Gastrocnemius medialis (tissue), 4 donors: ENCODE measurements at regions of chr17 and their contacts with region 1.

Region 1: DNA sequence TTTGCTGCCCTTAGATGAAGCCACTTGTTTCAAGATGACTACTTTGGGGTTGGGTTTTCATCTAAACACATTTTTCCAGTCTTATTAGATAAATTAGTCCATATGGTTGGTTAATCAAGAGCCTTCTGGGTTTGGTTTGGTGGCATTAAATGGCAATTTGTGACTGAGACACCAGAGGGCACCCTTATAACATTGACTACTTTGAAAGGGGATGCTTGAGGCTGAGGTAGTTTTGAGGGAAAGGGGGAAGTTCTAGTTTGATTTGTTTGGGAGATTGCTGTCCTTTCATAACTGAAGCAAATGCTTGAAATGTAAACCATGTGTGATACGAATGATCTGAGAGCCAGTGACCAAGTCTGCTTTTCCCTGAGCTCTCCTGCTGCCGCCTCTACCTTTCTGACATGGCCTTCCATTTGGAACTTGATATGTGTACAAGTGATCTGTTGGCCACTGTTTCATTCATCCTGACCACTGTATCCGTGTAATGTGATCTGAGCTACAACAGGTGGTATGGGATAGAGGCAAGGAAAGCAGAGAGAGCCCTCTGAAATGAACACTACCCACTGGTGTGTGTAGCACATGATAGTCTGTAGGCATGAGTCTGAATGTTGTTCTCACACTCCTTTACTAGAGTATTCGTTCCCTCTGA is 5.8 kb upstream of the RARA start:
- DNase-seq: peak in 1 of 2 donors; percentile 66
- ATAC-seq: peak; percentile 92 to 98
- H3K4me3 ChIP-seq: no peak overlapping the region
- H3K27ac ChIP-seq: peak overlapping the region; percentile 78 to 87 (median 82)
- H3K4me1 ChIP-seq: peaks cover 35 to 50% of the 10 kb centered on the region in 2 donors
- H3K27me3 ChIP-seq: no peaks in the 10 kb centered on the region
- CTCF ChIP-seq: peak; percentile 82 to 92 (median 86)
- POLR2A ChIP-seq: no peak

Region 2: DNA sequence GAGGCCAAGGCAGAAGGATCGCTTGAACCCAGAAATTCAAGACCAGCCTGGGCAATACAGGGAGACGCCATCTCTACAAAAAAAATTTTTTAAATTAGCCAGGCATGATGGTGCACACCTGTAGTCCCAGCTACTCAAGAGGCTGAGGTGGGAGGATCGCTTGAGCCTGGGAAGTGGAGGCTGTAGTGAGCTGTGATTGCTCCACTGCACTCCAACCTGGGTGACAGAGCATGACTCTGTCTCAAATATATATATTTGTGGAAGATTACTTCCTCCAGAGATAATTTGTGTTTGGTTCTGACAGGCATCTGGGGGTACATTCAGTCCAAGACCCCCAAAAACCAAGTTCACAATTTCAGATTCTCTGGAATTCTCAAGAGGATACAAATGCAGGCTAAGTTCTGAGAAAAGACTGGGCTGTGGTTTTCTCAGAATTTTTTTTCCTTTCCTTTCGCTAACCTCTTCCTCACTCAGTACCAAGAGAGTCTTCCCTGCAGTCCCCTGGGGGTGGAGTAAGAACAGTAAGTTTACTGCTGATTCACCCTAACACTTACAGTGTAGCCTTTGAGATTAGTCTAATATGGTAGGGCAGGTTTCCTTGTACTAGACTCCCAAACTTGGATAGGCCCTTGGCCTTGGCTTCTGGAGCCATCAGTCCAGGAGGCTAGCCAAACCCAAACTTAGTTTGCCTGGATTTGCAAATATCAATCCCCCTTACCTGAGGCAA is 399.8 kb before region 1 on chr17:
- in situ Hi-C with region 1: no loop called
- intact Hi-C with region 1: no loop called
- DNase-seq: no peak
- ATAC-seq: no peak
- H3K4me3 ChIP-seq: no peak overlapping the region
- H3K27ac ChIP-seq: no peak overlapping the region
- H3K4me1 ChIP-seq: no peaks in the 10 kb centered on the region
- H3K27me3 ChIP-seq: no peaks in the 10 kb centered on the region
- CTCF ChIP-seq: no peak
- POLR2A ChIP-seq: no peak

Region 3: DNA sequence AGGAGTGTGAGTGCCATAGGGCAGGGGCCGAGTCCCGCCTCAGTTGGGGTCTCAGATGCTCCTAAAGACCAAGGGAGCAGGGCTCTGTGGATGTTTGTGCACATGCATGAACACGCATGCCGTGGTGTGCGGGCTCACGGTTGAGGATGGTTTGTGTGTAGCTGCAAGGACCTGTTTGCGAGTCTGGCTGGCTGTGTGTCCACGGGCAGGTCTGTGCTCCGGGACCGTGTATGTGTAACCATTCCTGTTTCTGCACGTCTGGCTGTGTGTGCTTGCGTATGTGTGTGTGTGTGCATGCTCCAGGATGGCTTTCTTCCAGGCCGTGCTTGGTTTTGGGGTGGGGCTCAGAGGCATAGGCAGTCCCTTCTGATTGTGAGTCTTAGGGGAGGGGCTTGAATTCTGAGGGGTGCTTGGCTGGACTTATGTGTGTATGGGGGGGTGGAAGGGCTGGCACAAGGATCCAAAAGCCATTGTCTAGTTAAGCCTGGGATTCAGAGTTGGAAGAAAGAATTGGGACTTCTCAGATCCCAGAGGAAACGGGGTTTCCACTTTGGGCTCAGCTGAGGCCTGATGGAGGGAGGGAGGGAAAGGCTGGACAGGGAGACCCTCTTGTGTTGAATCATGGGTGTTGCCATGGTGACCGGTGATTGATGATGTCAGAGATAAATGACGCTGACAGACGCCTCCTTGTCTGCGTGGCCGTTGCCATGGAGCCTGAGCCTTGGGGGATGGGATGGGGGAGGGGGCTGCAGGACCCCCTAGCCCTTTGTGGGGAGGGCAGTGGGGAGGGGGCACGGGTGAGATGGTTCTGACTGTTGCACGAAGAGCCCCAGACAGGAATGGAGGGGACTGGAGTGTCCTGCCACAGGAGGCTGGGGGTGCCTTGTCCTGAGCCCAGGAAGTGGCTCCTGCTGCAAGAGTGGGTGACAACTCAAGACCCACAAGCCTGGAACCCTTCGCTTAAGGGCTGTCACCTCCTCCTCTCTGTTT is 47.1 kb after region 1 on chr17:
- in situ Hi-C with region 1: loop called (anchors 5 kb)
- intact Hi-C with region 1: loop called (anchors 1 kb)
- DNase-seq: no peak
- ATAC-seq: no peak
- H3K4me3 ChIP-seq: no peak overlapping the region
- H3K27ac ChIP-seq: peak overlapping the region; percentile 95 to 100 (median 98)
- H3K4me1 ChIP-seq: peaks cover 68 to 71% of the 10 kb centered on the region in 2 donors
- H3K27me3 ChIP-seq: no peaks in the 10 kb centered on the region
- CTCF ChIP-seq: no peak
- POLR2A ChIP-seq: no peak

Region 4: GRCh38 chr17:40355123-40355803 is 52.1 kb after region 1 on chr17:
- in situ Hi-C with region 1: loop called (anchors 5 kb)
- intact Hi-C with region 1: loop called (anchors 1 kb)
- DNase-seq: peak; percentile 50 to 74
- ATAC-seq: peak; percentile 48 to 55
- H3K4me3 ChIP-seq: no peak overlapping the region
- H3K27ac ChIP-seq: peak overlapping the region; percentile 33 to 69 (median 51)
- H3K4me1 ChIP-seq: peaks cover 17 to 20% of the 10 kb centered on the region in 2 donors
- H3K27me3 ChIP-seq: no peaks in the 10 kb centered on the region
- CTCF ChIP-seq: peak; percentile 97 to 99 (median 99)
- POLR2A ChIP-seq: no peak

Region 5: GRCh38 chr17:40371261-40371929 is 68.3 kb after region 1 on chr17:
- in situ Hi-C with region 1: no loop called
- intact Hi-C with region 1: no loop called
- DNase-seq: no peak
- ATAC-seq: no peak
- H3K4me3 ChIP-seq: no peak overlapping the region
- H3K27ac ChIP-seq: no peak overlapping the region
- H3K4me1 ChIP-seq: no peaks in the 10 kb centered on the region
- H3K27me3 ChIP-seq: no peaks in the 10 kb centered on the region
- CTCF ChIP-seq: no peak
- POLR2A ChIP-seq: no peak

Region 6: GRCh38 chr17:40417609-40418427 is 114.7 kb after region 1 on chr17 and contains the start of gene TOP2A:
- in situ Hi-C with region 1: loop called in 1 of 4 experiments (anchors 10 kb)
- intact Hi-C with region 1: loop called (anchors 1 kb)
- DNase-seq: peak; percentile 98 to 99
- ATAC-seq: peak; percentile 100
- H3K4me3 ChIP-seq: peak within 1 kb of the TSS; percentile 57 to 87 (median 62)
- H3K27ac ChIP-seq: peak within 1 kb of the TSS; percentile 37 to 58 (median 46)
- H3K4me1 ChIP-seq: peaks cover 6 to 10% of the 10 kb centered on the region in 2 donors
- H3K27me3 ChIP-seq: peaks cover 0 to 10% (median 5%) of the 10 kb centered on the region in 3 donors
- CTCF ChIP-seq: no peak
- POLR2A ChIP-seq: no peak
- total RNA-seq, gene TOP2A: 0.26 to 1.6 (median 1.0) TPM

Region 7: DNA sequence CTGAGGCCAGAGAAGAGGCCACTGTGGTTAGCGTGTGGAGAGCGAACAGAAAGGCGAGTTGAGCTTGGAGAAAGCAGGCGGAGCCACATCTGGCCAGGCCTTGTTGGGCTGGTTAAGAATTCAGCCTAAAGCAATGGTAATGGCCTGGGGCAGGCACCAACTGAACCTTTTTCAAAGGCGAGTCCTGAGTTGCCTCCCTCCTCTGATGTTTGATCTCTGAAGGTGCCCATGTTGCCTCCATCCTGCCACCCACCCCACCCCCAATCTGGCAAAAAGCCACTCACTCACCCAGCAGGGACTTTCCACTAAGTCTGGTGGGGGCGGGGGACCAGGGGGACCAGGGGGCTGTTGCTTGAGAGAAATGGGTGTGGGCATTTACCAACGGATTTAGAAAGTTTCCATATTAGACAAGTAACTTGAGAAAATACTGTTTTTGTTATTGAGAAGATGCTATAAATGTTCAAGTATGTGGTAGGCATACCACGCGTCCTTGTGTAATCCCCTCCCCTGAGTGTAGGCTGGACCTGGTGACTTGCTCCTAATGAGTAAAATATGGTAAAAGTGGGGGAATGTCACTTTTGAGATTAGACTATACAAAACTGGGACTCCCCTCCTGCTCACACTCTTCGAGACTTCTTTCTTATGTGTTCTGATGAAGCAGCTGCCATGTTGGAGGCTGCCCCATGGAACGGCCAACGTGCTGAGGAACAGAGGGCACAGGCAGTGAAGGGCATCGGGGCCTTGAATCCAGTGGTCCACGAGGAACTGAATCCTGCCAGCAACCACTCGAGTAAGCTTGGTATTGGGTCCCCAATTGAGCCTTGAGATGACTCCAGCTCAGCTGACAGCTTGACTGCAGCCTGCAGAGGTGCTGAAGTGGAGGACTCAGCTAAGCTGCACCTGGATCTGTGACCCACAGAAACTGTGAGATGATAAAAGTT is 228.2 kb after region 1 on chr17:
- in situ Hi-C with region 1: no loop called
- intact Hi-C with region 1: loop called (anchors 5 kb)
- DNase-seq: peak in 1 of 2 donors; percentile 11
- ATAC-seq: no peak
- H3K4me3 ChIP-seq: no peak overlapping the region
- H3K27ac ChIP-seq: peak overlapping the region in 1 of 4 donors; percentile 46
- H3K4me1 ChIP-seq: peaks cover 15 to 17% of the 10 kb centered on the region in 2 donors
- H3K27me3 ChIP-seq: no peaks in the 10 kb centered on the region
- CTCF ChIP-seq: no peak
- POLR2A ChIP-seq: no peak